ENCODE measurements at regions of chr2 and their contacts with region 1.

Region 1: GRCh38 chr2:208101716-208102631 is 22.4 kb downstream of the CRYGD start:
- DNase-seq: no peak
- ATAC-seq: peak; percentile 80
- H3K4me3 Mint-ChIP-seq: no peak overlapping the region
- H3K27ac Mint-ChIP-seq: no peak overlapping the region; the same call in 1 of the 2 replicates
- H3K4me1 Mint-ChIP-seq: peaks cover 35% of the 10 kb centered on the region
- H3K27me3 Mint-ChIP-seq: no peaks in the 10 kb centered on the region
- CTCF ChIP-seq: no peak

Region 2: DNA sequence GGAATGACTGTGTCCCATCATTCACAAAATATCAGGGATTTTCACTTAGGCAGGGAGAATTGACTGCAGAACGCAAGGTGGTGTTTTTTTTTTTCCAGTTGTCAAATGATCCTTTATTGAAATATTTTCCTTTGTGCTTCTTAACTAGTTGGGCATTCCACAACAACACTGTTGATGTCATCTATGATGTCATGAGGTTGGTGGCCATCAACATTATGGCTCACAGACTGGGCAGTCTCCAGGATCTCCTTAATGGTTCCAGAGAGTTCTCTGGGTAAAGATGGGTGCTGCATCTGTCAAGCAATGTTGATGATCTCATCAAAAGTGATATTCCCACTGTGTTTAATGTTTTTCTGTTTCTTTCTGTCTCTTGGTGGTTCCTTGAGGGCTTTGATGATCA is 44.9 kb before region 1 on chr2:
- CTCF ChIA-PET with region 1: no interaction called
- POLR2A ChIA-PET with region 1: no interaction called
- DNase-seq: no peak
- ATAC-seq: no peak
- H3K4me3 Mint-ChIP-seq: no peak overlapping the region
- H3K27ac Mint-ChIP-seq: no peak overlapping the region
- H3K4me1 Mint-ChIP-seq: peaks cover 2% of the 10 kb centered on the region; the same call in 1 of the 2 replicates
- H3K27me3 Mint-ChIP-seq: no peaks in the 10 kb centered on the region; the same call in 1 of the 2 replicates
- CTCF ChIP-seq: no peak

Region 3: GRCh38 chr2:208112969-208113368 is 11.0 kb after region 1 on chr2:
- CTCF ChIA-PET with region 1: interaction called, 15 read pairs
- POLR2A ChIA-PET with region 1: interaction called, 3 read pairs
- DNase-seq: peak; percentile 72
- ATAC-seq: peak; percentile 96
- H3K4me3 Mint-ChIP-seq: peak overlapping the region; percentile 67
- H3K27ac Mint-ChIP-seq: peak overlapping the region; percentile 91
- H3K4me1 Mint-ChIP-seq: peaks cover 35% of the 10 kb centered on the region
- H3K27me3 Mint-ChIP-seq: no peaks in the 10 kb centered on the region
- CTCF ChIP-seq: no peak

Region 4: DNA sequence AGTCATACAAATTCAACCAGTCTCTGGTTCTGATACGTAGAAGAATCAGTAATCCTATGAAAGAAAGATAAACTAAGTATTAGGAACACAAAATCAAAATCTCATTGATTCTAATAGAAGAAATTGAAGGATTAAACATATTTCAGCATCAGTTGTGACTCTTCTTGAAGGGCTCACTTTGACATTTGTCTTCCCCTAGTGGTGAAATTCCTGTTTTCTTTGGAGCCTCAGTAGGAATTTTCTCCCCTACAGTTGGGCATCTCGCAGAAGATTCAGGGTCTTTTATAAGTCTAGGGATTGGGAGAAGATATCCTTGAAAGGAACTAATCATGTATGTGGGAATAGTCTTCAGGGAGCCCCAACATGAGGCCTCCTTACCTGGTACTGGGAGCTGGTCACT is 46.8 kb after region 1 on chr2:
- CTCF ChIA-PET with region 1: interaction called, 30 read pairs
- POLR2A ChIA-PET with region 1: no interaction called
- DNase-seq: no peak
- ATAC-seq: 0 out of 2 replicates have a peak, but pooled peaks have one; percentile 46
- H3K4me3 Mint-ChIP-seq: no peak overlapping the region
- H3K27ac Mint-ChIP-seq: no peak overlapping the region
- H3K4me1 Mint-ChIP-seq: peaks cover 23% of the 10 kb centered on the region
- H3K27me3 Mint-ChIP-seq: no peaks in the 10 kb centered on the region; the same call in 1 of the 2 replicates
- CTCF ChIP-seq: no peak

Region 5: DNA sequence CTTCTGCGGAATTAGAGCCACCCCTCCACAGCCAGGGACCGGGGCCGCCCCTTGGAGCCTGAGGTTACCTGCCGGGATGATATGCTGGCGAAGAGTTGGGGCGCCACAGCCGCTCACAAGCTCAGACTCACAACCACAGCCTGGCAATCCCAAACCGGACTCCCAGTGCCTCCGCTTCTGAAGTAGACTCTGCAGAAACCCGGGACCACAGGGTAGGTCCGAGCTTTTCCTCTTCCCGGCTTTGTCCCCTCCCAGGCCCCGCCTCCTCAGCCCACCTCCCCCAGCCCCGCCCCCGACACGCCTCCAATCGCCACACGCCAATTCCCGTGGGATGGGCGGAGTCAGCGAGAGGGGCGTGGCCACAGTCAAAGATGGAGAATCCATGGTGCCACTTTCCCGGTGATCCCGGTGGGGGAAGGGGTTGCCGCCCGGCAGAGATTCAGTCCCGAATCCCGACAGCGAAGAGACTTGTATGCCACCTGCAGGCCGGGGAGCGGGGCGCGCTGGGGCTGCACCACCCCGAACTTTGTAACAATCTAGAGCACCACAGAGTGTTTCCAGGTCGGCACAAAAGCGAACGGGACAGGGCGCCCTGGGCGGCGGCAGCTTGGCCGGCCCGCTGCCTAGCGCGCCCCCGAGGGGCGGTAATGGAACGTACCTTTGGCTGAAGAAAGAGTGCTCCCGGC is 153.0 kb after region 1 on chr2 and contains the start of gene IDH1:
- CTCF ChIA-PET with region 1: interaction called, 28 read pairs
- POLR2A ChIA-PET with region 1: interaction called, 6 read pairs
- DNase-seq: peak; percentile 99
- ATAC-seq: peak; percentile 80
- H3K4me3 Mint-ChIP-seq: peak within 1 kb of the TSS; percentile 99
- H3K27ac Mint-ChIP-seq: peak within 1 kb of the TSS; percentile 99
- H3K4me1 Mint-ChIP-seq: peaks cover 42% of the 10 kb centered on the region
- H3K27me3 Mint-ChIP-seq: no peaks in the 10 kb centered on the region
- CTCF ChIP-seq: no peak
- total RNA-seq, gene IDH1: 280 to 352 TPM (median 291 TPM) in 3 replicates

Measured in WTC11 (cell line).